PC-3 (cell line): ENCODE measurements at regions of chr9 and their contacts with region 1.

Region 1: DNA sequence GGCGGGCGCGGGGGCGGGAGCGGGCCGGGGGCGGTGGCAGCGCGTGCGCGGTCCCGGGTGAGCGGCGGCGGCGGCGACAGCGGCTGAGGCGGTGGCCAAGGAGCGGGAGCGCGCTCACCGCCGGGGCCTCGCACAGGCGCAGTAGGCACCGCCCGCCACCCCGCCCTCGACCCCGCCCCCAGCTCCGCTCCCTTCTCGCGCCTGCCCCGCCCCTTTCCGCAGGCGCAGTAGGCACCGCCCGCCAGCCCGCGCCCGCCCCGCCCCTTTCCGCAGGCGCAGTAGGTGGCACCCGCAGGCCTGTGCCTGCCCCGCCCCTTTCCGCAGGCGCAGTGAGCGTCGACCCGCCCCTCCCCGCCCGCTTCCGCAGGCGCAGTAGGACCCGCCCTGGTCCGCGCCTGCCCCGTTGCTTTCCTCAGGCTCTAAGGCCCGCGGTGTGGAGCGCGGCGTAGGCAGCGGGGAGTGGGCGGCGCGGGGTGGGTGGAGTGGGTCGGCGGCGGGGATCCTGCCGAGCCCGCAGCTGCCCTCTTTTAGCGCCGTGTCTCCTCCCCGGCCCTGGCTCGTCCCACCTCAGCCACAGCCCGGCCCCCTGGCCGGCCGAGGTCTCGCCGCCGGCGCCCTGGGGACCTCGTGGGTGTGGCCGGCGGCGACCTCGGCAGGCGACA is at the start of gene CAMSAP1:
- DNase-seq: peak; percentile 85
- ATAC-seq: peak; percentile 72
- H3K4me3 ChIP-seq: peak within 1 kb of the TSS; percentile 90
- H3K27ac ChIP-seq: peak within 1 kb of the TSS; percentile 95
- H3K4me1 ChIP-seq: peaks cover 36% of the 10 kb centered on the region
- H3K27me3 ChIP-seq: no peaks in the 10 kb centered on the region
- CTCF ChIP-seq: no peak
- total RNA-seq, gene CAMSAP1: 16.4 and 32.0 TPM in 2 replicates

Region 2: DNA sequence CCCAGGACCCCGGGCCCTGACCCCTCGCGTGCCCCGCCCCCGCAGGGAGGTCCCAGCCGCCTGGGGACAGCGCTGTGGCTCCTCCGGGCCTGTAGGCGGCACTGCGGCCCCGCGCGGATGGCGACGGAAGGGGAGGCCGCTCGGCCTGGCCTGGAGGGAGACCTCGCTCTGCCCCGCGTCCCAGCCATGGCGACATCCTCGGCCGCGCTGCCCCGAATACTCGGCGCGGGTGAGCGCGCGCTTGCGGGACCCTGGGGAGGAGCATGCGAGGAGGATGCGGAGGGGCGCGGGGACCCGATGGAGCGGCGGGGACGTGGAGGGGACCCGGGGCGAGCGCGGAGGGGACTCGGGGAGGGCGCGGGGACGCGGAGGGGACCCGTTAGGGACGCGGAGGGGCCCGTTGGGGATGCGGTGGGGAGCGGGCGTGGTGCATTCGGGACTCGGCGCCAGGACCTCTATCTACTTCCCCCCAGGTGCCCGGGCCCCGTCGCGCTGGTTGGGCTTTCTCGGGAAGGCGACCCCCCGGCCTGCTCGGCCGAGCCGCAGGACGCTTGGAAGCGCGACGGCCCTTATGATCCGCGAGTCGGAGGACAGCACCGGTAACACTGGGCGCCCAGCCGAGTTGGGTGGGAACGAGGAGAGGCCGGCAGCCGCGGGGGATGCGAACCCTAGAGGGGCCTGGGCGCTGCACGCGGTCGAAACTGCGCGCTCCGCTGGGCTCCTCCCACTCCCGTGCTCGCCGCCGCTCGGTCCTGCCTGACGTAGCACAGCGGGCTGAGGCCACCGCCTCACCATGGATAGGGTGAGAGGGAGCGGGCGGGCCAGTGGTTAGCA is 406.8 kb before region 1 on chr9 and contains the start of gene MRPS2:
- CTCF ChIA-PET with region 1: no interaction called
- POLR2A ChIA-PET with region 1: no interaction called
- intact Hi-C with region 1: no loop called
- DNase-seq: peak; percentile 79
- ATAC-seq: peak; percentile 87
- H3K4me3 ChIP-seq: peak within 1 kb of the TSS; percentile 72
- H3K27ac ChIP-seq: peak within 1 kb of the TSS; percentile 47
- H3K4me1 ChIP-seq: peaks cover 14% of the 10 kb centered on the region
- H3K27me3 ChIP-seq: no peaks in the 10 kb centered on the region
- CTCF ChIP-seq: peak; percentile 60
- total RNA-seq, gene MRPS2: 62.4 and 73.4 TPM in 2 replicates

Region 3: DNA sequence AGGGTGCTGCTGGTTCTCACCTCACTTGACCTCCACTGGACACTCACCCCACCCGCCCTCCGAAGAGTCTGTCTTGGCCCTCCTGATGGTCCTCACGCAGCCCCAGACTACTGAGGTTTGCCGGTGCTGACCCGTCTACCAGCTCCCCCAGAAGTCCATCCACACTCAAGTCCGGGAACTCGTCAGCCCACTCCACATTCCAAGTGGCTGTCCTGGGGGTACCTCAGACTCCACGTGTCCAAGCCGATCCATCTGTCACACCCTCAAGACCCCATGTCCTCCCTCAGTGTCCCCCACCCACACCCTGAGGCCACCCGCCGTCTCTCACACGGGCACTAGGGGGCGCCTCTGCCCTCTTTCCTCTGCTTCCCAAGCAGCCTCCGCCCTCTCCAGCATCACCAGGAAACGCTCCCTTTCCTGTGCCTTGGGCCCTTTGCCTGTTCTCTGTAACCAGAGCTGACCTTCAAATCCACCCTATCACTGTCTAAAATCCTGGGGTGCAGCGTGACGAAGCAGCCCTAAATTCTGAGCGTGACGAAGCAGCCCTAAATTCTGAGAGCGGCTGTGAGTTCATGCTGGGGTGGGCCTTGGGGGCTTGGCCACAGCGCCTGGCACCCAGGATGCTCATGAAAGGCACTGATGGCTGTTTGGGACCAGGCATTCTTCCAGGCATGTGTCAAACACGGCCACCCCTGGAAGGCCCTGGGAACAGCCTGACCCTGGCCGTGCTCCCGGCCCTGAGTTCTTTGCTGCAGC is 109.9 kb before region 1 on chr9:
- CTCF ChIA-PET with region 1: no interaction called
- POLR2A ChIA-PET with region 1: no interaction called
- intact Hi-C with region 1: loop called (anchors 2 kb)
- DNase-seq: peak; percentile 52
- ATAC-seq: peak; percentile 85
- H3K4me3 ChIP-seq: no peak overlapping the region
- H3K27ac ChIP-seq: no peak overlapping the region
- H3K4me1 ChIP-seq: no peaks in the 10 kb centered on the region
- H3K27me3 ChIP-seq: no peaks in the 10 kb centered on the region
- CTCF ChIP-seq: peak; percentile 83

Region 4: GRCh38 chr9:135927195-135928112 is 19.9 kb after region 1 on chr9:
- CTCF ChIA-PET with region 1: no interaction called
- POLR2A ChIA-PET with region 1: no interaction called
- intact Hi-C with region 1: no loop called
- DNase-seq: no peak
- ATAC-seq: peak; percentile 43
- H3K4me3 ChIP-seq: no peak overlapping the region; the same call in 1 of the 2 replicates
- H3K27ac ChIP-seq: peak overlapping the region; percentile 64
- H3K4me1 ChIP-seq: peaks cover 17% of the 10 kb centered on the region
- H3K27me3 ChIP-seq: no peaks in the 10 kb centered on the region
- CTCF ChIP-seq: no peak

Region 5: DNA sequence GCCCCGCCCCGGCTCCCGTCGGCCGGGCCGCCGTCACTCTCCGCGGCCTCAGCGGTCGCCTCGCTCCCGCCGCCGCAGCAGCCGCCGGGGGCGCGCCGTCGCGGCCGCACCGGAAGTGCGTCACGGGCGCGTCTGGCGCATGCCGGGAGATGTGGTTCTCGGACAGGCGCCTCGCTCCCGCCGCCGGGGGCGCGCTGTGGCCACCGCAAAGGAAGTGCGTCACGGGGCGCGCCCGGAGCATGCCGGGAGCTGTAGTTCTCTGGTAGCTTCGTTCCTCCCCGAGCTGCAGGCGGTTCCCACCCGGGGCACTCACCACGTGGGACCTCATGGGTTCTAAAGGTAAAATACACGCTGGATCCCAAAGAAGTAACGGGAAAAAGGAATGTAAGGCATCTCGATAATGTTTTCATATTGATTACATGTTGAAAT is 53.7 kb after region 1 on chr9 and contains the start of gene UBAC1:
- CTCF ChIA-PET with region 1: no interaction called
- POLR2A ChIA-PET with region 1: no interaction called
- intact Hi-C with region 1: loop called (anchors 5 kb)
- DNase-seq: peak; percentile 92
- ATAC-seq: peak; percentile 83
- H3K4me3 ChIP-seq: peak within 1 kb of the TSS; percentile 96
- H3K27ac ChIP-seq: 0 out of 2 replicates have a peak within 1 kb of the TSS, but pooled peaks have one; percentile 16
- H3K4me1 ChIP-seq: peaks cover 10% of the 10 kb centered on the region
- H3K27me3 ChIP-seq: no peaks in the 10 kb centered on the region
- CTCF ChIP-seq: no peak
- total RNA-seq, gene UBAC1: 65.9 and 77.3 TPM in 2 replicates